ENCODE measurements at regions of chr16 and their contacts with region 1.

Region 1: DNA sequence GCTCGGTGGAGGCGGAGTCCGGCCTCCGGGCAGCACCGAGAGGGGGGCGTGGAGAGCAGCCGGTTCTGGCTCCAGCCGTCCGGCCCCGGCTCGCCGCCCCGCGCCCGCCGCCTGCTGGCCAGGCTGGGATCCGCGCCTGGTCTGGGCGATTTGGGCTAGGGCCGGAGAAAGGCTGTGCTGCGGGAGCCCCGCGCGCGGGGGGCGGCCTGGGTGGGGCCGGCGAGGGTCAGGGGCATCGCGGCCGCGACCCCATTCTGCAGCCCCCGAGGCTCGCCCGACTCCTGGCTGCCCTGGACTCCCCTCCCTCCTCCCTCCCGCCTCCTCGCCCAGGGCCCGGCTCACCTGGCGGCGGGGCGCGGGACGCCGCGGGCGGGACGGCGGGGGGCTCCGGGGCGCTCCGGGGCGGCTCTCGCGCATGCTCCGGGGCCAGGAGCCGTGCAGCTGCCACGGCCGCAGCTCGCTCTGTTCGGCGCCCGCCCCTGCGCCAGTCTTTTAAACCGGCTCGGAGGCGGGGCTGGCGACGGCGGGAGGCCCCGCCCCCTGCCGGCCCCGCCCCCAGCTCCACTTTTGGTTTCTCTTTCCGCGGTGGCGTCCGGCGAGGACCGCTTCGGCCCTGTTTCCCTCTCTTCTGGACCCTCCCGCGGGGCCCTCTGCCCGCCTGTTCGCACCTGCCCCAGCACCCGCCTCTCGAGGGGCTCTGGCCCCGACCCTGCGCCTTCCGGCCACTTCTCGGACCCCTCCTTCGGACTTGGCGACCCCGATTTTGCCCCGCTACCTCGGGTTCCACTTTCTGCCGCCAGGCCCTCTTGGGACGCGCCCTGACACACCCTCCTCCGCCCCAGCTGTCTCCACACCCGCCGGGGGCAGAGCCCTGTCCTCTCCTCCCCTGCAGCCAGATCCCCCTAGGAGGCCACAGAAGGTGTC is at the start of gene SOCS1:
- DNase-seq: peak; percentile 84 to 93 (median 93)
- ATAC-seq: peak; percentile 81 to 86
- H3K4me3 ChIP-seq: peak within 1 kb of the TSS; percentile 95
- H3K27ac ChIP-seq: peak within 1 kb of the TSS; percentile 96
- H3K4me1 ChIP-seq: peaks cover 10% of the 10 kb centered on the region
- H3K27me3 ChIP-seq: no peaks in the 10 kb centered on the region
- total RNA-seq, gene SOCS1: 0.96 to 5.5 (median 2.2) TPM

Region 2: DNA sequence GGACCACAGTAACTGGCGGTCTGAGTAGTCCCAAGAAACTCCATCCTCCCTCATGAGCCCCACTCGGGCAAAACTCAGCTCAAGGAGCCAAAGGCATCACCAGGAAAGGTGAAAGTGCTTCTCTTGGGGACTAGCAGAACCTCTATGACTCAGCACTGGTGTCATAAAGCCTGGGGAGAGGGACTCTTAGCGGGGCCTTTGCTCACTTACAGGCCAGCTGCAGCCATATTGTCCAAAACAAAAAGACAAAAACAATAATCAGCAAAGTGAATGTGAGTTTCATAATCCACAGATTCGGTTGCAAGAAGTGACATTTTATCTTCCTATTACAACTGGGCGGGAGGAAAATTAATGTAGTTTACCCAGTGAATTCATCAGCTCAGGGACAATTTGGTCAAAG is 561.2 kb before region 1 on chr16 and contains the start of gene TEKT5:
- intact Hi-C with region 1: no loop called
- DNase-seq: no peak
- ATAC-seq: no peak
- H3K4me3 ChIP-seq: no peak within 1 kb of the TSS
- H3K27ac ChIP-seq: no peak within 1 kb of the TSS
- H3K4me1 ChIP-seq: no peaks in the 10 kb centered on the region
- H3K27me3 ChIP-seq: no peaks in the 10 kb centered on the region
- total RNA-seq, gene TEKT5: not detected

Region 3: GRCh38 chr16:10964039-10964890 is 291.7 kb before region 1 on chr16:
- intact Hi-C with region 1: loop called in 2 of 4 experiments (anchors 5 kb)
- DNase-seq: peak; percentile 82 to 93 (median 92)
- ATAC-seq: peak; percentile 86 to 89
- H3K4me3 ChIP-seq: no peak overlapping the region
- H3K27ac ChIP-seq: peak overlapping the region; percentile 13
- H3K4me1 ChIP-seq: peaks cover 3% of the 10 kb centered on the region
- H3K27me3 ChIP-seq: no peaks in the 10 kb centered on the region

Region 4: GRCh38 chr16:11105038-11105903 is 150.7 kb before region 1 on chr16:
- intact Hi-C with region 1: loop called (anchors 5 to 10 kb)
- DNase-seq: peak in 2 of 3 donors; percentile 51 to 61
- ATAC-seq: peak; percentile 79 to 82
- H3K4me3 ChIP-seq: no peak overlapping the region
- H3K27ac ChIP-seq: peak overlapping the region; percentile 84
- H3K4me1 ChIP-seq: peaks cover 19% of the 10 kb centered on the region
- H3K27me3 ChIP-seq: no peaks in the 10 kb centered on the region

Region 5: GRCh38 chr16:11155284-11155806 is 100.7 kb before region 1 on chr16:
- intact Hi-C with region 1: loop called in 1 of 4 experiments (anchors 10 kb)
- DNase-seq: no peak
- ATAC-seq: peak; percentile 11 to 34
- H3K4me3 ChIP-seq: no peak overlapping the region
- H3K27ac ChIP-seq: no peak overlapping the region
- H3K4me1 ChIP-seq: no peaks in the 10 kb centered on the region
- H3K27me3 ChIP-seq: no peaks in the 10 kb centered on the region

Region 6: DNA sequence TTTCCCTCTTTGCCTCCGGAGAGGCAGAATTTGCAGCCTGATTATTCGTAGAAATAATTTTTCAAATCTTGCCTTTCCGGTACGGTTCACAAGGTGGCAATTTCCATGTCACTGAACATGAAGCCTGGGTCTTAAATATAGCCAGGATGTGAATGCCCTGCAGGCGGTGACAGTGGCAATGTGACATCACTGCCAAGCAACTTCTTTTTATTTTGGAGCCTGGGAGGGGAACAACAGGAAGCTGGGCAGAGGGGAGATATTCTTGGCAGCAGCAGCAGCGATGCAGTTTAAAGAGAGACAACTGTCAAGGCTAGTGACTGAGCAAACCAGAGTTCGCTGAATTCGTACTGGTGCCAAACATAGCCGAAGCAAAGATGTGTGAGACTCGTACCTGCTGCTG is 891.7 kb after region 1 on chr16:
- intact Hi-C with region 1: loop called in 1 of 4 experiments (anchors 10 kb)
- DNase-seq: peak in 1 of 3 donors; percentile 21
- ATAC-seq: peak; percentile 79 to 81
- H3K4me3 ChIP-seq: peak overlapping the region; percentile 30
- H3K27ac ChIP-seq: peak overlapping the region; percentile 9
- H3K4me1 ChIP-seq: no peaks in the 10 kb centered on the region
- H3K27me3 ChIP-seq: no peaks in the 10 kb centered on the region